ENCODE measurements at regions of chr1 and their contacts with region 1.

Region 1: GRCh38 chr1:236103646-236104218 is 38.6 kb upstream of the GPR137B start:
- DNase-seq: no peak
- H3K4me3 ChIP-seq: no peak overlapping the region
- H3K27ac ChIP-seq: no peak overlapping the region
- H3K4me1 ChIP-seq: no peaks in the 10 kb centered on the region
- H3K27me3 ChIP-seq: no peaks in the 10 kb centered on the region
- CTCF ChIP-seq: peak; percentile 73 to 85 (median 78)
- POLR2A ChIP-seq: no peak

Region 2: GRCh38 chr1:234288946-234289345 is 1814.8 kb before region 1 on chr1:
- intact Hi-C with region 1: loop called (anchors 5 kb)
- DNase-seq: no peak
- H3K4me3 ChIP-seq: no peak overlapping the region
- H3K27ac ChIP-seq: no peak overlapping the region
- H3K4me1 ChIP-seq: no peaks in the 10 kb centered on the region
- H3K27me3 ChIP-seq: no peaks in the 10 kb centered on the region
- CTCF ChIP-seq: no peak
- POLR2A ChIP-seq: no peak

Region 3: GRCh38 chr1:234342774-234343173 is 1761.0 kb before region 1 on chr1:
- intact Hi-C with region 1: no loop called
- DNase-seq: no peak
- H3K4me3 ChIP-seq: no peak overlapping the region
- H3K27ac ChIP-seq: no peak overlapping the region
- H3K4me1 ChIP-seq: no peaks in the 10 kb centered on the region
- H3K27me3 ChIP-seq: no peaks in the 10 kb centered on the region
- CTCF ChIP-seq: no peak
- POLR2A ChIP-seq: no peak

Region 4: DNA sequence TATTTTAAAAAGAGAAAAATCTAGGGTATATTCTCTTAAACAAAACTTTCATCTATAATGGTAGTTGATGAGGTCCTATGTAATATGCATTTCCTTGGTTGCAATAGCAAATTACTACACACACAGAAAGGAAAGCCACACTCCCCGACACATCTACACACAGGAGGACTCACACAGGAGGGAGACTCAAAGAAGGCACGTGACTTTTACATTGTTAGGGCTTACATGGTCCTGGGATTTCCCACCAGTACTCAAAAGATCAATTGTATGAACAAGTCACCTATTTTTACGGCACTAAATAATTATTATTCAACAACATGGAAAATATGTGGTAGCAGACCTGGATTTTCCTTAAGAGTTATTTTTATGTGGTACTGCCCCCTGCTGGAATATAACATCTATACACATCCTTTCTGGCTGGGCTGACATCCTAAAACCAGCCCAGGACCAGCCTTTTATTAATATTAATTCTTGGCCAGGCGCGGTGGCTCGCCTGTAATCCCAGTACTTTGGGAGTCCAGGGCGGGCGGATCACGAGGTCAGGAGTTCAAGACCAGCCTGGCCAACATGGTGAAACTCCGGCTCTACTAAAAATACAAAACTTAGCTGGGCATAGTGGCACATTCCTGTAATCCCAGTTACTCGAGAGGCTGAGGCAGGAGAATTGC is 386.1 kb after region 1 on chr1:
- intact Hi-C with region 1: loop called (anchors 5 kb)
- DNase-seq: no peak
- H3K4me3 ChIP-seq: no peak overlapping the region
- H3K27ac ChIP-seq: no peak overlapping the region
- H3K4me1 ChIP-seq: no peaks in the 10 kb centered on the region
- H3K27me3 ChIP-seq: no peaks in the 10 kb centered on the region
- CTCF ChIP-seq: peak; percentile 58 to 59 (median 59)
- POLR2A ChIP-seq: no peak

Measured in vagina (tissue), 2 donors.